A549 (cell line): ENCODE measurements at regions of chr11 and their contacts with region 1.

Region 1: DNA sequence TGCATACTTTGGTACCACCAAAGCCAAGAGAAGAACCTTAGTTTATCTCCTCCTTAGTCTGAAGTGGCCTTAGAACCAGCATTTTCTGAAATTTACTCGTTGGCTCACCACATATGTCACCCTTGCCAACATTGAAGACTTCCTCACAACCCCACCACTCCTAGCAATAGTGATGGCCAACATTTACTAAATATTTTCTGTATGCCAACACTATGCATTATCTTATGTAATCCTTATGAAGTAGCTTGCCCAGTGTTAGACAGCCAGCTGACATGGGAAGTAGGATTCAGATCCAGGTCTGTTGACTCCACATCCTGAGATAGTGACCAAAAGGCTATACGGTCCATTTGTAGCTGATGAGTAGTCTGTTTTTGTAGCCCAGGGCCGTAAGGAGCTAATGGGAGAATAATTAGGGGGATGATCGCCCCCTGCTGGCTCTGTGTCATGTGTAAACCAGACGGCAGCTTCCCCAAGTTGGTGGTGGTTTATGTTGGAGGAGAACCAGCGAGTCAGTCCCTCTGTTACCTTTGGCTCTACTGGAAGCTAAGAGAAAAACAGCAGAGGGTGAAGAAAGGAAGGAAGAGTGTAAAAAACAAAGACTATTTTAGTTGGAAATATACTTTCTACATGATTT is 120.5 kb upstream of the RASSF10 start:
- DNase-seq: peak; percentile 64 to 77
- ATAC-seq: peak; percentile 70 to 81
- H3K4me3 ChIP-seq: no peak overlapping the region
- H3K27ac ChIP-seq: peak overlapping the region; percentile 20 to 30; a peak in 3 of 6 replicates
- H3K4me1 ChIP-seq: peaks cover 24% of the 10 kb centered on the region
- CTCF ChIP-seq: peak; percentile 86
- EP300 ChIP-seq: no peak
- POLR2A ChIP-seq: no peak
- RAD21 ChIP-seq: peak; percentile 88 to 89

Region 2: DNA sequence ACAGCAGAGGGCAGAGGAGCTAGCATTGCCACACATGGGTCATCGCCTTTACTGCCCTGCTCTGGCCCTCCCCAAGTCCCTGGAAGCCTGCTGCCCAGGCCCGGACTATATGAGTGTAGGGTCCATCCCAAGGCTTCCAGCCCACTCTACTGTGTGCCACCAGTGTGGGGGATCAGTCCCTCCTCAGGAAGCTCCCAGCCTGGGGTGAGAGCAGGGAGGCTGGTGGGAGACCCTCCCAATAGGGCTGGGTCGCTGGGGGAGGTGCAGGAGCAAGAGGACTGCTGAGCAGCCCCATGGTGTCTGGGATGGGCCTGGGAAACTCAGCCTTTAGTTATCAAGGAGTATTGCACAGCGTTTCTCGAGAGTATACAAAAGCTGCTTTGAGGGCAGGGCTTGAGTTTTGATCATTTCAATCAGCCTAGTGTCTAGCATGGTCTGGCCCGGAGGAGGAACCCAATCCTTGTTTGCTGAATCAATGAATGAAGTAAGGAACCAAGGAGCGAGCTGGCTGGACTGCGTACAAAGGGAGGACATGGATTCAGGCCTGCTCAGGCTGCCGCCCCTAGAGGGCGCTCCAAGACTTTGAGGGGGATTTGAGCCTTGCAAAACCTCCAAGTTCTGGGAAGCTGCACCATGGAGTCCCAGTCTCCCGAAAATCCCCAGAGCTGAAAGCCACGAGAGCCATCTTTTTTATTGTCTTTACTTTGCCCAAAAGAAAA is 600.3 kb before region 1 on chr11:
- CTCF ChIA-PET with region 1: interaction called, 35 read pairs
- POLR2A ChIA-PET with region 1: no interaction called
- DNase-seq: peak; percentile 88 to 90
- ATAC-seq: peak; percentile 43 to 77
- H3K4me3 ChIP-seq: no peak overlapping the region
- H3K27ac ChIP-seq: peak overlapping the region; percentile 94 to 99
- H3K4me1 ChIP-seq: peaks cover 46% of the 10 kb centered on the region
- CTCF ChIP-seq: peak; percentile 97
- EP300 ChIP-seq: no peak
- POLR2A ChIP-seq: no peak
- RAD21 ChIP-seq: peak; percentile 93 to 96

Region 3: DNA sequence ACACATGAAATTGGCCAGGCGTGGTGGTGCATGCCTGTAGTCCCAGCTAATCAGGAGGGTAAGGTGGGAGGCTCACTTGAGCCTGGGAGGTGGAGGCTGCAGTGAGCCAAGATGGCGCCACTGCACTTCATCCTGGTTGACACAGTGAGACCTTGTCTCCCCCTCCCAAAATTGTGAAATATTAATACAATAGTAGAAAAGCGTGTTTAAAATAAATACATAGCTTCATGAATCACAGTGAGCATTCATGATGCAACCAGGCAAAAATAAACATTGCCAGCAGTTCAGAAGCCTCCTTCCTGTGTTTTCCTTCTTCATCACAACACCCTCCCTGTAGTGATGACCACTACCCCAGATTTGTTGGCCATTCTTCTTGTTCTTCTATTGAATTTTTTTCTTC is 218.7 kb before region 1 on chr11:
- CTCF ChIA-PET with region 1: interaction called, 10 read pairs
- POLR2A ChIA-PET with region 1: no interaction called
- DNase-seq: no peak
- ATAC-seq: no peak
- H3K4me3 ChIP-seq: no peak overlapping the region
- H3K27ac ChIP-seq: peak overlapping the region in 1 of 2 experiments; percentile 46; a peak in 2 of 6 replicates
- H3K4me1 ChIP-seq: peaks cover 12% of the 10 kb centered on the region
- CTCF ChIP-seq: no peak
- EP300 ChIP-seq: no peak
- POLR2A ChIP-seq: no peak
- RAD21 ChIP-seq: no peak; a peak in 1 of 5 replicates

Region 4: GRCh38 chr11:12813371-12814225 is 75.0 kb before region 1 on chr11:
- CTCF ChIA-PET with region 1: interaction called, 13 read pairs
- POLR2A ChIA-PET with region 1: no interaction called
- DNase-seq: peak; percentile 61 to 70
- ATAC-seq: peak; percentile 68 to 75
- H3K4me3 ChIP-seq: no peak overlapping the region
- H3K27ac ChIP-seq: peak overlapping the region; percentile 26 to 74; a peak in 5 of 6 replicates
- H3K4me1 ChIP-seq: peaks cover 92% of the 10 kb centered on the region
- CTCF ChIP-seq: peak; percentile 24; the same call in 1 of the 3 replicates
- EP300 ChIP-seq: no peak
- POLR2A ChIP-seq: no peak
- RAD21 ChIP-seq: peak; percentile 49; a peak in 4 of 5 replicates

Region 5: GRCh38 chr11:12868315-12869073 is 20.1 kb before region 1 on chr11:
- CTCF ChIA-PET with region 1: interaction called, 11 read pairs
- POLR2A ChIA-PET with region 1: no interaction called
- DNase-seq: no peak
- ATAC-seq: peak; percentile 48 to 51; a peak in 3 of 6 replicates
- H3K4me3 ChIP-seq: no peak overlapping the region
- H3K27ac ChIP-seq: peak overlapping the region in 1 of 2 experiments; percentile 49; a peak in 2 of 6 replicates
- H3K4me1 ChIP-seq: peaks cover 57% of the 10 kb centered on the region
- CTCF ChIP-seq: peak; percentile 41; the same call in 2 of the 3 replicates
- EP300 ChIP-seq: no peak
- POLR2A ChIP-seq: no peak
- RAD21 ChIP-seq: no peak

Region 6: DNA sequence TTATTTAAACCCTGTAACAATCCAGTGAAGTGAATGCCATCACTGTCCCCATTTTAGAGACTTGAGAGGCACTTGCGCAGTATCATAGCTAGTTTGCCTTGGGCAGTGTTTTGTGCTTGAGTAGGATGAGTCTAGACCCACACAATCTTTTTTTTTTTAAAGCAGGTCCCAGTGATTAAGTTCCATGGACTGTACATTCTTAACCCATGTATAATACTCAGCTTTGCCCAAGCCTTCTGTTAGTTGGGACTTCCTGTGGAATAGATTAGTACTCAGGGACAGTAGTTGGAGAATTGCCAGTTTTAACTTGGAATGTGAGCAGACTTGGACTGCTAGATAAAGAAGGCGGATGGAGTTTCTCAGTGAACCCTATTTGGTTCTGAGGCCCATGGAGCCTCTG is 11.9 kb after region 1 on chr11:
- CTCF ChIA-PET with region 1: interaction called, 10 read pairs
- POLR2A ChIA-PET with region 1: no interaction called
- DNase-seq: peak in 1 of 2 experiments; percentile 37
- ATAC-seq: peak; percentile 48 to 70; a peak in 4 of 6 replicates
- H3K4me3 ChIP-seq: no peak overlapping the region
- H3K27ac ChIP-seq: no peak overlapping the region
- H3K4me1 ChIP-seq: peaks cover 20% of the 10 kb centered on the region; the same call in 2 of the 3 replicates
- CTCF ChIP-seq: no peak
- EP300 ChIP-seq: no peak
- POLR2A ChIP-seq: no peak
- RAD21 ChIP-seq: no peak

Region 7: GRCh38 chr11:12927221-12927620 is 38.6 kb after region 1 on chr11:
- CTCF ChIA-PET with region 1: no interaction called
- POLR2A ChIA-PET with region 1: no interaction called
- DNase-seq: no peak
- ATAC-seq: no peak
- H3K4me3 ChIP-seq: no peak overlapping the region
- H3K27ac ChIP-seq: no peak overlapping the region
- H3K4me1 ChIP-seq: no peaks in the 10 kb centered on the region
- CTCF ChIP-seq: no peak
- EP300 ChIP-seq: no peak
- POLR2A ChIP-seq: no peak
- RAD21 ChIP-seq: no peak